ENCODE measurements at regions of chr2 and their contacts with region 1.

Region 1: DNA sequence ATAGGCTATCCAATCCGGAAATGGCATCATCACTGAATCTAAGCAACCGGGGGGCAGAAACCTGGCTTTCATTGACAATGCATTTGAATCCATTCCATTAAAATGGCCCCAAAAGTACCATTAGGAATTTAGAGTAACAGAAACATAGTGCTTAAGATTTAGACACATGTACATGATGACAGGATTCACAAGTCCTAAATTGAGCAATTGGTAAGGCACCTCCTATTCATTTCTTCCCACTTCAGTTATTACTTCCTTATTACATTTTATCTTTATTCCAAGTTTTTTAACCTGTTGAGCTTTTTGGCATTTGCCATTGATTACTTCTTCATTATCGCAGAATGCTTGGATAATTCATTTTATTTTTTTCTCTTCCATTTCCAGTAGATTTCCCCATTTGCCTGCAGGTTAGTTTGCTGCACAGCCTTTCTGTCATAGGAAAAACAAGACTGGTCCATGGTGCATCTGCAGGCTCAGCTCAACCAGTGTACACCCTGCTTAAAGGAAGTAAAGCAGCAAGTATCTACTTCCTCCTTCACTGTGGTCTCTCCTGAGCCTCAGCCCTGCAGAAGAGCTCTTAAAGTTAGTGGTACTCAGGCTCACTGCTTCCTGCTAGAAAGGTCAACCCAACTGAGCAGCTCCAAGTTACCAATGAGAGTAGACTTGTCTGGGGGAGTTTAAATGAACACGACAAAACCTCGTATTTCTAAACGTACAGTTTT is 89.2 kb downstream of the DOCK10 start:
- DNase-seq: no peak
- ATAC-seq: peak; percentile 83
- H3K4me3 Mint-ChIP-seq: peak overlapping the region; percentile 42
- H3K27ac Mint-ChIP-seq: peak overlapping the region; percentile 79
- H3K4me1 Mint-ChIP-seq: peaks cover 92% of the 10 kb centered on the region
- H3K27me3 Mint-ChIP-seq: no peaks in the 10 kb centered on the region
- CTCF ChIP-seq: no peak

Region 2: DNA sequence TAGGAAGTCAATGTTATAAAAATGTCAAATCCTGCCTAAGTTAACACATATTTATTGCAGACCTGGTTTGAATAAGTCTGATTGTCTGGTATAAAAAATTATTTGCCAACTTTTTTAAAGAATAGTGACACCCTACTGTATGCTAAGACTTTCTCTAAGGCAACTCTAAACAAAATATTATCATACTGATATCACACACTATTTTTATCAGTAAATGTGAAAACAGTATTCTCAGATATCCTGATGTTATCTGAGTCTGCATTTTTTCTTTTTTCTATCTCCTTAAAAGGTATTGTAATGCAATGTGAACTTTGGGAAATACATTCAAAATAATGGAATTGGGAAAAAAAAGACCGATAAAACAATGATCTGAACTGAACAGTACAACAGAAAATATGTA is 38.0 kb before region 1 on chr2:
- CTCF ChIA-PET with region 1: no interaction called
- POLR2A ChIA-PET with region 1: no interaction called
- intact Hi-C with region 1: no loop called
- DNase-seq: no peak
- ATAC-seq: no peak
- H3K4me3 Mint-ChIP-seq: no peak overlapping the region
- H3K27ac Mint-ChIP-seq: no peak overlapping the region
- H3K4me1 Mint-ChIP-seq: peaks cover 19% of the 10 kb centered on the region
- H3K27me3 Mint-ChIP-seq: no peaks in the 10 kb centered on the region
- CTCF ChIP-seq: no peak

Region 3: GRCh38 chr2:224938651-224939182 is 14.4 kb before region 1 on chr2:
- CTCF ChIA-PET with region 1: interaction called, 3 read pairs
- POLR2A ChIA-PET with region 1: interaction called, 11 read pairs
- intact Hi-C with region 1: loop called (anchors 1 kb)
- DNase-seq: no peak
- ATAC-seq: peak; percentile 45
- H3K4me3 Mint-ChIP-seq: peak overlapping the region; percentile 65
- H3K27ac Mint-ChIP-seq: peak overlapping the region; percentile 82
- H3K4me1 Mint-ChIP-seq: peaks cover 82% of the 10 kb centered on the region
- H3K27me3 Mint-ChIP-seq: no peaks in the 10 kb centered on the region
- CTCF ChIP-seq: no peak

Measured in activated B cell treated with CpG ODN at 0.5 μM for 24 hours (primary cell).